Activated B cell treated with CpG ODN at 0.5 μM for 24 hours (primary cell): ENCODE measurements at regions of chr10 and their contacts with region 1.

Region 1: GRCh38 chr10:119489991-119490326 is 52.6 kb downstream of the RGS10 start:
- DNase-seq: no peak
- ATAC-seq: no peak
- H3K4me3 Mint-ChIP-seq: peak overlapping the region; percentile 86
- H3K27ac Mint-ChIP-seq: peak overlapping the region; percentile 86
- H3K4me1 Mint-ChIP-seq: peaks cover 15% of the 10 kb centered on the region
- H3K27me3 Mint-ChIP-seq: no peaks in the 10 kb centered on the region
- CTCF ChIP-seq: no peak

Region 2: GRCh38 chr10:119165171-119166110 is 324.5 kb before region 1 on chr10 and contains the start of gene SFXN4:
- CTCF ChIA-PET with region 1: no interaction called
- POLR2A ChIA-PET with region 1: no interaction called
- intact Hi-C with region 1: loop called (anchors 1 kb)
- DNase-seq: peak; percentile 83
- ATAC-seq: peak; percentile 93
- H3K4me3 Mint-ChIP-seq: peak within 1 kb of the TSS; percentile 92
- H3K27ac Mint-ChIP-seq: peak within 1 kb of the TSS; percentile 88
- H3K4me1 Mint-ChIP-seq: peaks cover 18% of the 10 kb centered on the region
- H3K27me3 Mint-ChIP-seq: no peaks in the 10 kb centered on the region
- CTCF ChIP-seq: no peak
- total RNA-seq, gene SFXN4: 18.4 and 21.7 TPM in 2 replicates

Region 3: DNA sequence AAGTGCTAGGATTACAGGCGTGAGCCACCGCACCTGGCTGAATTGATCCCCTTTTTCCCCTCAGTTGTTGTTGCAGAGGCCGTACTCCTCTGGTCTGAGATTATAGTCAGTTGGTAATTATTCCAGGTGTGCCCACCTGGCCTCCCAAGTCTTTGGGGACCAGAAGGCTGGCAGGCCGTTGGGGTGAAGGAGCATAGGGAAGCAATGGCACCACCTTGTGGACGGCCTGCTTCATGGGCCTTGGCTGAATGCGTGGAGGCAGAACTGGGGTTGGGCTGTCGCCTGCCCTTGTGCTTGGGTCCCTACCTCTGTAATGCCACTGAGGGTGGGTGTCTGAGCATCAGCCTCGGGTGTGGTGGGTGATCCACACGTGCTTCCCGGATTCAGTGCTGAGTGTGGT is 73.1 kb before region 1 on chr10:
- CTCF ChIA-PET with region 1: interaction called, 19 read pairs
- POLR2A ChIA-PET with region 1: no interaction called
- intact Hi-C with region 1: loop called (anchors 1 kb)
- DNase-seq: peak; percentile 57
- ATAC-seq: peak; percentile 92
- H3K4me3 Mint-ChIP-seq: no peak overlapping the region
- H3K27ac Mint-ChIP-seq: no peak overlapping the region
- H3K4me1 Mint-ChIP-seq: peaks cover 2% of the 10 kb centered on the region
- H3K27me3 Mint-ChIP-seq: no peaks in the 10 kb centered on the region
- CTCF ChIP-seq: peak; percentile 22

Region 4: GRCh38 chr10:119461380-119461779 is 28.6 kb before region 1 on chr10:
- CTCF ChIA-PET with region 1: interaction called, 8 read pairs
- POLR2A ChIA-PET with region 1: interaction called, 6 read pairs
- intact Hi-C with region 1: loop called (anchors 1 kb)
- DNase-seq: no peak
- ATAC-seq: peak; percentile 92
- H3K4me3 Mint-ChIP-seq: peak overlapping the region; percentile 33
- H3K27ac Mint-ChIP-seq: peak overlapping the region; percentile 78
- H3K4me1 Mint-ChIP-seq: peaks cover 39% of the 10 kb centered on the region
- H3K27me3 Mint-ChIP-seq: peaks cover 7% of the 10 kb centered on the region
- CTCF ChIP-seq: no peak

Region 5: GRCh38 chr10:119478111-119478802 is 11.7 kb before region 1 on chr10:
- CTCF ChIA-PET with region 1: interaction called, 17 read pairs
- POLR2A ChIA-PET with region 1: interaction called, 22 read pairs
- intact Hi-C with region 1: loop called (anchors 1 kb)
- DNase-seq: peak; percentile 66
- ATAC-seq: peak; percentile 96
- H3K4me3 Mint-ChIP-seq: peak overlapping the region; percentile 68
- H3K27ac Mint-ChIP-seq: peak overlapping the region; percentile 93
- H3K4me1 Mint-ChIP-seq: peaks cover 40% of the 10 kb centered on the region
- H3K27me3 Mint-ChIP-seq: no peaks in the 10 kb centered on the region
- CTCF ChIP-seq: no peak